Spleen (tissue), 13 donors: ENCODE measurements at regions of chr17 and their contacts with region 1.

Region 1: GRCh38 chr17:82551779-82552457 is 32.4 kb downstream of the FOXK2 start:
- DNase-seq: peak; percentile 93
- H3K4me3 ChIP-seq: peak overlapping the region in 1 of 8 donors; percentile 19
- H3K27ac ChIP-seq: peak overlapping the region in 1 of 8 donors; percentile 45
- H3K4me1 ChIP-seq: peaks cover 19 to 83% (median 69%) of the 10 kb centered on the region in 6 donors
- H3K27me3 ChIP-seq: no peaks in the 10 kb centered on the region
- CTCF ChIP-seq: peak; percentile 40 to 83 (median 76)
- POLR2A ChIP-seq: no peak

Region 2: DNA sequence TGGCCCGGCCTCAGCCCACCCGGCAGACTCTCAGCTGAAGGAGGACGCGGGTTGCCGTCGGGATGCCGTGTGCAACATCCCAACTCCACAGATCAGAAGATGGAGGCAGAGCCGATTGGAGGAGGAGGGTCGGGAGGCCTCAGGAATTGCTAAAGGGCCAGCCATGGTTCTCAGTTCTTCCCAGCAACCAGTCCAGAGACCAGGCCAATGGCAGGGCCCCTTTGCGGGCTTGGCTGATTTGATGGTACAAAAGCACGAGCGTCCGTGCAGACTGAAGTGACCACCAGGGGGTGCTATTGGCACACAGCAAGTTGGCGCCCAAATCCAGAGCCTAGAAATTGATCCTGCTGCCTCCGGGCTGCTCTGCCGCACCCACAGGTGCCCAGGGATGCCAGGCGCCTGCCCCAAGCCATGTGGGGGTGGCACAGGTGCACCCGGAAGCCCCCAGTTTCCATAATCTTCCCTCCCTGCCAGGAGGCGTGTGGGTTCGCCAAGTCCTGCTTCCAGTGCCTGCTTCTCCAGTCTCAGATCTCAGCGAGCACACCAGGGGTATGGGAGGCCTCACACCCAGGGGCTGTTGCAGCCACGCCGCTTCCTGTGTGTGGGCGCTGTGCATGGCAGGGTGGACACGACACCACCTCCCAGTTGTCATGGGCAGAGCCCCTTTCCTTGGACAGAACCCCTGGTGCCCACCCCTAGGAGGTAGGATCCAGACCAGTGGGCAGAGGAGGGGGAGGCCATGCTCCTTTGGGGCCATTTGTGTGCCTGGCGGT is 200.0 kb before region 1 on chr17:
- intact Hi-C with region 1: loop called (anchors 5 kb)
- DNase-seq: peak; percentile 93
- H3K4me3 ChIP-seq: no peak overlapping the region
- H3K27ac ChIP-seq: no peak overlapping the region
- H3K4me1 ChIP-seq: peaks cover 3 to 20% (median 6%) of the 10 kb centered on the region in 6 donors
- H3K27me3 ChIP-seq: peaks cover 0 to 76% (median 5%) of the 10 kb centered on the region in 7 donors
- CTCF ChIP-seq: peak; percentile 83 to 97 (median 94)
- POLR2A ChIP-seq: no peak

Region 3: DNA sequence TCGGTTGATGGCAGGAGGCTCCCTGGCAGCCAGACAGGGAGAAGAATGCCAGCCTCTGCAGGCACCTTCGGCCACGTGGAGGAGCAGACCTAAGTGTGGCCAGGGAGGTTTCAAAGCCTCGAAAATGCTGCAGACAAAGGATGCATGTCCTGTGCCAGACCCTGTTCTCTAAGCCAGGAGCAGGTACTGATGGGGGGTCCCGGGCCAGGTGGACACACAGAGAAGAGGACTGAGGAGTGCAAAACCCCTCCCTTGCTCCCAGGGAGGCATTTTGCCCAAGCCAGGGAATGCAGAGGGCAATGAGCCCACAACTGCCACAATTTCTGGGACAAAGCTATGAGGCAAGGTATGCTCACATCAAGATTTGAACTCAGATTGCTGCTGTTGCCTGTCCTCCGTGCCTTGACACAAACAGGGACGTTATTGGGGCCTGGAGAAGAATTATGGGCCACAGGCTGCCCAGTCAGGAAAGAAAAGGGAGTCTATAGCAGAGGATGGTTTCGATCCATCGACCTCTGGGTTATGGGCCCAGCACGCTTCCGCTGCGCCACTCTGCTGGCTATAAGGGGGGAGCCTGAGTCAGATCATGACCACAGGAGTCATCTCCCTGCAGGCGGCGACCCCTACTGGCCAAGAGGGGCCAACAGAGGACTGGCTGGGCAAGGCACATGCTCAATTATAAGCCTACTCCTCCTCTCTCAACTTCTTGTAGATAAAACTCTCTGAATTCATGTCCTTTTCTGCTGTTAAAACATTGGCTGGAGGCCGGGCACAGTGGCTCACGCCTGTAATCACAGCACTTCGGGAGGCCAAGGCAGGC is 57.5 kb before region 1 on chr17:
- intact Hi-C with region 1: loop called (anchors 10 kb)
- DNase-seq: peak; percentile 96
- H3K4me3 ChIP-seq: peak overlapping the region in 1 of 8 donors; percentile 43
- H3K27ac ChIP-seq: peak overlapping the region in 5 of 8 donors; percentile 35 to 90 (median 58)
- H3K4me1 ChIP-seq: peaks cover 5 to 52% (median 44%) of the 10 kb centered on the region in 6 donors
- H3K27me3 ChIP-seq: no peaks in the 10 kb centered on the region
- CTCF ChIP-seq: peak; percentile 87 to 99 (median 95)
- POLR2A ChIP-seq: no peak

Region 4: GRCh38 chr17:82603981-82604448 is 52.1 kb after region 1 on chr17:
- intact Hi-C with region 1: no loop called
- DNase-seq: no peak
- H3K4me3 ChIP-seq: no peak overlapping the region
- H3K27ac ChIP-seq: peak overlapping the region in 6 of 8 donors; percentile 55 to 79 (median 71)
- H3K4me1 ChIP-seq: peaks cover 9 to 62% (median 42%) of the 10 kb centered on the region in 6 donors
- H3K27me3 ChIP-seq: no peaks in the 10 kb centered on the region
- CTCF ChIP-seq: peak in 3 of 11 experiments; percentile 15 to 19 (median 18)
- POLR2A ChIP-seq: no peak